ENCODE measurements at regions of chr2 and their contacts with region 1.

Region 1: GRCh38 chr2:189096769-189097447 is 82.7 kb downstream of the COL5A2 start:
- DNase-seq: no peak
- H3K4me3 ChIP-seq: no peak overlapping the region
- H3K4me1 ChIP-seq: peaks cover 4% of the 10 kb centered on the region; the same call in 1 of the 2 replicates
- H3K27me3 ChIP-seq: no peaks in the 10 kb centered on the region

Region 2: GRCh38 chr2:189287982-189288521 is 191.1 kb after region 1 on chr2:
- in situ Hi-C with region 1: loop called (anchors 25 kb)
- DNase-seq: peak; percentile 13 to 98
- H3K4me3 ChIP-seq: no peak overlapping the region
- H3K4me1 ChIP-seq: peaks cover 18% of the 10 kb centered on the region
- H3K27me3 ChIP-seq: no peaks in the 10 kb centered on the region